ENCODE measurements at regions of chr6 and their contacts with region 1.

Region 1: GRCh38 chr6:44265007-44265721 is at the start of gene NFKBIE:
- DNase-seq: peak; percentile 99
- ATAC-seq: peak; percentile 94
- total RNA-seq, gene NFKBIE: 9.1 TPM

Region 2: DNA sequence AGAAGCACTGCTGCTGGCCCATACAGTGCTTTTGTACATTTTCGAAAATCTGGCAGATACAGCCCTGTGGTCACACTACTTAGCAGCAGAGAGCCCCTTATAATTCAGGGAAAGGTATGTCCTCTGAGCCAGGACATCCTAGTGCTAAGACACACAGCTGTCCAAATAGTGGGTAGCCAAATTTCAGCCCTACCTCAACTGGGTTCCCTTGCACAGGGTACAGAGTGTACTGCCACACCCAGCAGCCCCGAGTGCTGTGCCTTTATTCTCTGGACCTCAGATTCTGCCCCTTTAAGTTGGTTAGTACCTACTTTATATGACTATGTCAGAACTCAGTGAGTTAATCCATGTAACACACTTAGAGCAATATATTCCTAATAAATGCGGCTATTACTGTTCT is 1590.4 kb before region 1 on chr6:
- intact Hi-C with region 1: loop called (anchors 5 kb)
- DNase-seq: no peak
- ATAC-seq: no peak

Region 3: GRCh38 chr6:44415873-44416502 is 150.8 kb after region 1 on chr6:
- intact Hi-C with region 1: no loop called
- DNase-seq: no peak
- ATAC-seq: no peak

Measured in sciatic nerve (tissue), 2 donors.